ENCODE measurements at regions of chr2 and their contacts with region 1.

Region 1: DNA sequence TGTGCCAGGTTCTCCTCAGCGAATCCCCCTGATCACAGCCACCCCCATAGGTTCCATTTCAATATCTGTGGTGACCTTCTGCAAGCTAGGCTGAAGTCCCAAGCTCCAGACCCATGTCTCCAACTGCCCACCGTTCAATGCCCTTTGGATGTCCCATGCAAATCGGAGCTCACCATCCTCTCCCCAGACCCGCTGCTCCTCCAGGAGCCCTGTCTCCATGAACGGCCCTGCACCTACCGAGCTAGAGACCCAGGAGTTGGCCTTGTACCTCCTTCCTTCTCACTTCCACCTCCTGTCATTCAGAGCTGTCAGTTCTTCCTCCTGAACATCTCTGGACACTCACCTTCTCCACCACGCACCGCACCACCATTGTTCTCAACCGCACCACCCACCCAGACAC is 1.0 kb upstream of the FAHD2A start:
- DNase-seq: no peak
- H3K4me3 ChIP-seq: peak overlapping the region in 58 of 59 donors; percentile 70 to 100 (median 97)
- H3K27ac ChIP-seq: peak overlapping the region in 2 of 59 donors; percentile 87 to 92
- H3K27me3 ChIP-seq: no peaks in the 10 kb centered on the region
- CTCF ChIP-seq: no peak

Region 2: DNA sequence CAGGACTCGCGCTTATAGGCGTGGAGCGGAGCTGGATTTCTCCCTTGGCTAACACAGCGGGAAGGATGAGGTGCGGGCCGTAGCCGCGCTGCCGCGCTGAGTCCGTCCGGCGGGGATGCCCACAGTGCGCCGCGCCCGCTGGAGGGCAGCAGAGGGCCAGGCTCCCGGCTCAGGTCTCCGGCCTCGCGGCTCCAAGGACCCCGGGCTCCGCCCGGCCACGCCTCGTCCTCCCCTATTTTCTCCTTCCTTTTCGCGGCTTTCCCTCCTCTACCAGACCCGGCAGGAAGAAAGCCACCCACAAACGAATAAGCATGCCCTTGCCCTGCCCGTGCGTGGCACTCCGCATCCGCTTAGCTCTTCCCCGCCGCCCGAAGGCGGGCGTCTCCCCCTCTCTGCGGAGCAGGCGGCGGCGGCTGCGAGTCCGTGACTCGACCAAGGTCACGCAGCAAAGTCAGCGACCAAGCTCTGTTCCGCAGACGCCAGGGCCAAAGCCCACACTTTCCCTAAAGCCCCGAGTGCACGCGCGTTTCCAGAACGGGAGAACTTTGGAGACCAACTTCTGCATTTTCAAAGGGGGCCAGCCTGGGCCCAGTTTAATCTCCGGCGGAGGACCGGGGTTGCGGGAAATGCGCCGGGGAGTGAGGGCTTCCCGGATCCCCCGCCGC is 55.8 kb before region 1 on chr2:
- intact Hi-C with region 1: loop called in 1 of 2 experiments (anchors 2 kb)
- DNase-seq: peak; percentile 66 to 88 (median 76)
- H3K4me3 ChIP-seq: peak overlapping the region; percentile 37 to 77 (median 65)
- H3K27ac ChIP-seq: peak overlapping the region in 45 of 59 donors; percentile 4 to 79 (median 59)
- H3K27me3 ChIP-seq: peaks cover 0 to 2% (median 0%) of the 10 kb centered on the region in 45 donors
- CTCF ChIP-seq: peak; percentile 55 to 90 (median 78)

Measured in dorsolateral prefrontal cortex (tissue), 120 donors.